ENCODE measurements at regions of chr11 and their contacts with region 1.

Region 1: GRCh38 chr11:18105802-18106574 is at the start of gene SAAL1:
- DNase-seq: peak; percentile 79 to 84 (median 83)
- H3K4me3 ChIP-seq: peak within 1 kb of the TSS; percentile 92 to 95
- H3K4me3 Mint-ChIP-seq: peak within 1 kb of the TSS; percentile 90 to 98 (median 94)
- H3K27ac ChIP-seq: peak within 1 kb of the TSS; percentile 56
- H3K27ac Mint-ChIP-seq: peak within 1 kb of the TSS; percentile 65 to 94 (median 92)
- H3K4me1 ChIP-seq: peaks cover 21% of the 10 kb centered on the region
- H3K4me1 Mint-ChIP-seq: peaks cover 22 to 50% (median 29%) of the 10 kb centered on the region in 4 donors
- H3K27me3 ChIP-seq: no peaks in the 10 kb centered on the region
- H3K27me3 Mint-ChIP-seq: peaks cover 1 to 7% of the 10 kb centered on the region in 2 donors
- total RNA-seq, gene SAAL1: 18.4 to 21.2 TPM

Region 2: DNA sequence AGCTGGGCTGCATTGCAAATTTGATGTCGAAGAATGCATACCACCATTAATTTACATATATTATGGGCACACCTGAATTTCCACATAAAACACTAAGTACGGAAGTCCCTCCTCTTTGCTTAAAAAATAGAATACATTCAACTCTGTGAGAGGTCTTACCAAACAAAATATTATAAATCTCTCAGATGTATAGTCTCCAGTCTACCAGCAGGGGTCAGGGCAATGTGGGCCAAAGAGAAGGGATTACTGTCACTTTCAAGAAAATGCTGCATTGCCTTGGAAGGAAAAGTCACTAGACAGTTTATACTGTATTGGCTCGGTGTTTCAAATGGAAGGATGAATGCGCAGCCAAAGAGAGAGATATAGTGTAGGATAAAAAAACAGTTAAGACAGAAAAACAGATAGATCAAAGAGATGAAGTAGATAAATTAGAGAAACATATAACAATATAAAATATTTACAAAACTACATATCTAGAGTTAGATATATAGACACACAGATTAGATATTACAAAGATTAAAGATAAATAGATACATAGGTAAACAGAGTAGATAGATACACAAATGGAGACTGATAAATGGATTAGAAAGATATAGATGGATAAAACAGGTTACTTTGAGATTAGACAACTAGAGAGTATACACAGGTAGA is 114.1 kb before region 1 on chr11:
- CTCF ChIA-PET with region 1: interaction called, 56 read pairs
- POLR2A ChIA-PET with region 1: no interaction called
- intact Hi-C with region 1: loop called (anchors 1 kb)
- DNase-seq: peak; percentile 43 to 55 (median 47)
- H3K4me3 ChIP-seq: no peak overlapping the region
- H3K4me3 Mint-ChIP-seq: no peak overlapping the region
- H3K27ac ChIP-seq: no peak overlapping the region
- H3K27ac Mint-ChIP-seq: peak overlapping the region in 2 of 7 donors; percentile 60 to 65
- H3K4me1 ChIP-seq: no peaks in the 10 kb centered on the region
- H3K4me1 Mint-ChIP-seq: peaks cover 0 to 2% (median under 1%) of the 10 kb centered on the region in 4 donors
- H3K27me3 ChIP-seq: no peaks in the 10 kb centered on the region
- H3K27me3 Mint-ChIP-seq: no peaks in the 10 kb centered on the region

Region 3: GRCh38 chr11:18012863-18013781 is 92.9 kb before region 1 on chr11 and contains the start of gene SERGEF:
- CTCF ChIA-PET with region 1: interaction called, 24 read pairs
- POLR2A ChIA-PET with region 1: interaction called, 29 read pairs
- intact Hi-C with region 1: loop called (anchors 1 kb)
- DNase-seq: peak; percentile 91 to 92 (median 91)
- H3K4me3 ChIP-seq: peak within 1 kb of the TSS; percentile 72 to 94
- H3K4me3 Mint-ChIP-seq: peak within 1 kb of the TSS; percentile 93 to 99 (median 96)
- H3K27ac ChIP-seq: peak within 1 kb of the TSS; percentile 73
- H3K27ac Mint-ChIP-seq: peak within 1 kb of the TSS; percentile 94 to 100 (median 98)
- H3K4me1 ChIP-seq: peaks cover 19% of the 10 kb centered on the region
- H3K4me1 Mint-ChIP-seq: peaks cover 18 to 41% (median 26%) of the 10 kb centered on the region in 4 donors
- H3K27me3 ChIP-seq: no peaks in the 10 kb centered on the region
- H3K27me3 Mint-ChIP-seq: no peaks in the 10 kb centered on the region
- total RNA-seq, gene SERGEF: 46.2 to 54.1 TPM

Region 4: DNA sequence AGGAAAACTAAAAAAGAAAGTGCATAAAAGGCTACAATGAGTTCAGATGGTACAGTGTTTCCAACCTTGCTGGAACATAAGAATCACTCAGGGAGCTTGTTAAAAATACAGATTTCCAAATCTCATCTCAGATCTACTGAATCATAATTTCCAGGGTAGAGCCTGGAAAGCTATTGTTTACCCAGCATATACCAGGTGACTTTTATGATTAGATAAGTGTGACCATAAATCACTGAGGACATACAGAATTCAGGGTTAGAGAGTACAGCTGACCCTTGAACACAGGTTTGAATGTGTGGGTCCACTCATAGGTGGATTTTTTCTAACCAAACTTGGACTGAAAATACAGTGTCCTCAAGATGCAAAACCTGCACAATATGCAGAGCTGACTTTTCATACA is 12.0 kb before region 1 on chr11:
- CTCF ChIA-PET with region 1: interaction called, 23 read pairs
- POLR2A ChIA-PET with region 1: interaction called, 3 read pairs
- intact Hi-C with region 1: no loop called
- DNase-seq: no peak
- H3K4me3 ChIP-seq: no peak overlapping the region
- H3K4me3 Mint-ChIP-seq: no peak overlapping the region
- H3K27ac ChIP-seq: no peak overlapping the region
- H3K27ac Mint-ChIP-seq: no peak overlapping the region
- H3K4me1 ChIP-seq: no peaks in the 10 kb centered on the region
- H3K4me1 Mint-ChIP-seq: peaks cover 0 to 5% (median 2%) of the 10 kb centered on the region in 4 donors
- H3K27me3 ChIP-seq: no peaks in the 10 kb centered on the region
- H3K27me3 Mint-ChIP-seq: no peaks in the 10 kb centered on the region

Region 5: DNA sequence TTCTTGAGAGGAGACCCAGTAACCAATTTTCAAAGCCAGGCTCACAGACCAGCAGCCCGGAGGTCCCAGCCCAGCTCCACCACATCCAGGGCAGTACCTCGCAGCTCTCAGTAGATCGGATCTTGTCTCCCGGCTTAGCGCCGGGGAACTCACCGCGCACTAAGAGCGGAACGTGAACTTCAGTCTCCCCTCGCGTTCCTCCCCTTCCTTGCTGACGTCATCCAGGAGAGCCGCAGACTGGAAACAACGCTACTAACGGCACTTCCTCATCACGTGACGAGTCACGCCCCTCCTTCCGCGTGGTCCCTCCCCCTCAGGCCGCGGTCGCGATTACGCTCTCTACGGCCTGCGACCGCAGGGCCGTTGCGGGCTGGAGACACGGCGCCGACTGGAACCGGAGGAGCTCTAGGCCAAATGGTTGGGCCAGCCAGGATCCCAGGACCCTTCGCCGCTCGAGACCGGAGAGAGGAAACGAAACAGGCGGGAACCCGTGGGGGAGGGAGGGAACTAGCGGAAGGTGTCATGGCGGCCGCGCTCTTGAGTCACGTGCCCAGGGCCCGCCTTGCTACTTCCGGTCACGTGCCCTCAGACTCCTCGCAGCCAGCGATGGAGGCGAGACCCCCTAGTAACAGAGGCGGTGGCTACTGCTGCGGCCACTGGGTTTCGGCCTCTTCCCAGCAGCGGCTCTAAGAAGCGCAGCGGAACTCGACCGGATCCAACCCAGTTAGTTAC is 216.2 kb after region 1 on chr11 and contains the starts of genes GTF2H1 and HPS5:
- CTCF ChIA-PET with region 1: no interaction called
- POLR2A ChIA-PET with region 1: no interaction called
- intact Hi-C with region 1: loop called (anchors 10 kb)
- DNase-seq: peak; percentile 97 to 99 (median 98)
- H3K4me3 ChIP-seq: peak within 1 kb of the TSS; percentile 72 to 93
- H3K4me3 Mint-ChIP-seq: peak within 1 kb of the TSS; percentile 96 to 99 (median 98)
- H3K27ac ChIP-seq: peak within 1 kb of the TSS; percentile 99
- H3K27ac Mint-ChIP-seq: peak within 1 kb of the TSS; percentile 99 to 100 (median 100)
- H3K4me1 ChIP-seq: peaks cover 65% of the 10 kb centered on the region
- H3K4me1 Mint-ChIP-seq: peaks cover 50 to 86% (median 66%) of the 10 kb centered on the region in 4 donors
- H3K27me3 ChIP-seq: no peaks in the 10 kb centered on the region
- H3K27me3 Mint-ChIP-seq: no peaks in the 10 kb centered on the region
- total RNA-seq, gene GTF2H1: 60.1 to 61.6 TPM
- total RNA-seq, gene HPS5: 22.1 to 23.7 TPM

Measured in CD4-positive, alpha-beta memory T cell (primary cell).